ENCODE measurements at regions of chr2 and their contacts with region 1.

Region 1: GRCh38 chr2:75640621-75641121 is 5.9 kb upstream of the MRPL19 start:
- DNase-seq: peak in 1 of 2 experiments; percentile 72
- H3K4me3 ChIP-seq: no peak overlapping the region
- H3K27ac ChIP-seq: no peak overlapping the region
- H3K4me1 ChIP-seq: no peaks in the 10 kb centered on the region
- H3K27me3 ChIP-seq: peaks cover 0 to 2% (median 0%) of the 10 kb centered on the region in 4 experiments; a peak in 1 of 7 replicates
- CTCF ChIP-seq: peak; percentile 90 to 98 (median 97)
- EP300 ChIP-seq: no peak
- POLR2A ChIP-seq: no peak
- RAD21 ChIP-seq: peak; percentile 91 to 92

Region 2: GRCh38 chr2:75627895-75628504 is 12.7 kb before region 1 on chr2:
- CTCF ChIA-PET with region 1: interaction called, 28 read pairs
- POLR2A ChIA-PET with region 1: no interaction called
- DNase-seq: peak in 1 of 2 experiments; percentile 85
- H3K4me3 ChIP-seq: no peak overlapping the region
- H3K27ac ChIP-seq: no peak overlapping the region
- H3K4me1 ChIP-seq: no peaks in the 10 kb centered on the region
- H3K27me3 ChIP-seq: no peaks in the 10 kb centered on the region
- CTCF ChIP-seq: peak; percentile 90 to 93 (median 90)
- EP300 ChIP-seq: no peak
- POLR2A ChIP-seq: no peak
- RAD21 ChIP-seq: peak; percentile 88 to 89

Region 3: GRCh38 chr2:75654012-75654411 is 13.3 kb after region 1 on chr2:
- CTCF ChIA-PET with region 1: interaction called, 17 read pairs
- POLR2A ChIA-PET with region 1: interaction called, 4 read pairs
- DNase-seq: no peak
- H3K4me3 ChIP-seq: no peak overlapping the region
- H3K27ac ChIP-seq: no peak overlapping the region
- H3K4me1 ChIP-seq: no peaks in the 10 kb centered on the region
- H3K27me3 ChIP-seq: no peaks in the 10 kb centered on the region
- CTCF ChIP-seq: peak; percentile 2 to 38 (median 35); a peak in 2 of 4 replicates
- EP300 ChIP-seq: no peak
- POLR2A ChIP-seq: no peak
- RAD21 ChIP-seq: no peak

Region 4: DNA sequence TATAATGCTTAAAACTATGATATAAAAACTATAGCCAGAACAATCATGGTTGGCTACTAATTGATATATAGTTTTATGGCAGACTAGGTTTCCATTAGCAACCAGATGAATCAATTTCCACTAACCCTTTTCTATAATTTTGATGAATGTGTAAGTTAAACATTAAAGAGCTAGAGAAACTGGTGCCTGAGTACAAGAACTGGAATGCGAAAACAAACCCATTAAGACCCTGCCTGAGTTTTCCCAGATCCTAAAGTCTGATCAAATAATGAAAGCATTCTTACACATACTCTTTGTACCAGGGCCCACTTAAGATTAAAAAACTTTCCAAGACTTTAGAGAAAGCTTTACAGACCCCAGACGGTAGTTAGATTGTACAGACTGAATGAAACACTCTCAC is 27.2 kb after region 1 on chr2:
- CTCF ChIA-PET with region 1: interaction called, 14 read pairs
- POLR2A ChIA-PET with region 1: interaction called, 4 read pairs
- DNase-seq: no peak
- H3K4me3 ChIP-seq: no peak overlapping the region
- H3K27ac ChIP-seq: no peak overlapping the region
- H3K4me1 ChIP-seq: 0 out of 7 replicates have a peak, but pooled peaks cover 0 to 2% (median under 1%) of the 10 kb centered on the region in 4 experiments
- H3K27me3 ChIP-seq: no peaks in the 10 kb centered on the region
- CTCF ChIP-seq: no peak
- EP300 ChIP-seq: no peak
- POLR2A ChIP-seq: no peak
- RAD21 ChIP-seq: no peak

Region 5: DNA sequence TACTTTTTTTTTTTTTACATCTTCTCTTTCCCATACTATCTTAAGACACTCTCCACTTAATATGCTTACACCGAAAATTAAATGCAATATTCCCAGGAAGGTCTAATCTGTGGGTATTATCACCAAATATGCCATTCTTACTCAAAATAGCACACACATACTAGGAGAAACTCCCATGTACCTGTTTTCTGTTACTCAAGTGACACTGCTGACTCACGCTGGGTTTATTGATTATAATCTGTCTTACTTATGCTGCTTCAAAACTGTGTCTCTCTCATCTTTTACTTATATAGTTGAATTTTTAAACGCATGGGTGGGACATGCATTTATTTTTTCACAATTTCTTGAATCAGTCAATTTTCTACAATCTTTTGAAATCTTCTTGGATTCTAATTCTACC is 35.8 kb after region 1 on chr2:
- CTCF ChIA-PET with region 1: interaction called, 31 read pairs
- POLR2A ChIA-PET with region 1: interaction called, 4 read pairs
- DNase-seq: no peak
- H3K4me3 ChIP-seq: no peak overlapping the region
- H3K27ac ChIP-seq: no peak overlapping the region
- H3K4me1 ChIP-seq: no peaks in the 10 kb centered on the region
- H3K27me3 ChIP-seq: no peaks in the 10 kb centered on the region
- CTCF ChIP-seq: no peak
- EP300 ChIP-seq: no peak
- POLR2A ChIP-seq: no peak
- RAD21 ChIP-seq: no peak

Measured in H1 (cell line).